ENCODE measurements at regions of chr7 and their contacts with region 1.

Region 1: DNA sequence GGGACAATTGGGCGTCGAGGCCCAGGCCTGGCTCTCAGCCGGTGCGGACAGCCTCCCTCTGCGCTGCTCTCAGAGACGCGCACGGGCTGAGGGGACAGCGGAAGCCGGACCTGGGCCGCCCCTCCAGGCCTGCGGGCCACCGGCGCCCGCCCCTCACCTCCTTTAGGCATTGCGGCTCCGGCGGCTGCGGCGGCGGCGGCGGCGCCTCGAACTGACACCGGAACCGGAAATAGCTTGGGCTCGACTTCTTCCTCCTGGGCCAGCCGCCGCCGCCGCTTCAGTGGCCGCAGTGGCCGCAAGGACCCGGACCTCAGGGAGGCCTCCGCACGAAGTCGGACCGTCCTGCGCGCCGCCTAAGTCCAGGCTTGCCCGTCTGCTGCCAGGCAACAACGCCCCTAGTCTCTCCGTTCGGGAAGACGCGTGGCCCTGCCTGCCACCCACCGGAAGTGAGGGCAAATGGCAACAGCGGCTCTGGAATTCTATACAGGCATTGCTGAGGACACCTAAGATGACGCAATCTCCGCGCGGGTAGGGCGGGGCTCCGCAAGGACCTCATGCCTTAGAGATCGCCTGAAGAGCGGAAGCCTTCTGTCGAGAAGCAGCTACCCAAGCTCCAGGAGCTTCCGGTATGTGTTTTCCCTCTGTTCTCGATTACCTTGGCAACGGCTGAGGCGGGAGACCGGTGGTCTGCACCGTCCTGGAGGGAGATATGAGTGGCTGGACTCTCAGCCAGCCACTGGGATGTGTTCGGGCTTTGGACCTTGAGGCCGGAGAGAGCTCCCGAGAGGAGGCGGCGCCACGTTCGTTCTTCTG is at the starts of genes BUD31 and PDAP1:
- DNase-seq: peak; percentile 86
- ATAC-seq: peak; percentile 88
- H3K4me3 Mint-ChIP-seq: peak within 1 kb of the TSS; percentile 99
- H3K27ac Mint-ChIP-seq: peak within 1 kb of the TSS; percentile 99
- H3K4me1 Mint-ChIP-seq: peaks cover 18% of the 10 kb centered on the region
- H3K27me3 Mint-ChIP-seq: no peaks in the 10 kb centered on the region
- CTCF ChIP-seq: no peak
- total RNA-seq, gene BUD31: 98.4 to 99.5 TPM (median 98.7 TPM) in 3 replicates
- total RNA-seq, gene PDAP1: 157 to 177 TPM (median 160 TPM) in 3 replicates

Region 2: DNA sequence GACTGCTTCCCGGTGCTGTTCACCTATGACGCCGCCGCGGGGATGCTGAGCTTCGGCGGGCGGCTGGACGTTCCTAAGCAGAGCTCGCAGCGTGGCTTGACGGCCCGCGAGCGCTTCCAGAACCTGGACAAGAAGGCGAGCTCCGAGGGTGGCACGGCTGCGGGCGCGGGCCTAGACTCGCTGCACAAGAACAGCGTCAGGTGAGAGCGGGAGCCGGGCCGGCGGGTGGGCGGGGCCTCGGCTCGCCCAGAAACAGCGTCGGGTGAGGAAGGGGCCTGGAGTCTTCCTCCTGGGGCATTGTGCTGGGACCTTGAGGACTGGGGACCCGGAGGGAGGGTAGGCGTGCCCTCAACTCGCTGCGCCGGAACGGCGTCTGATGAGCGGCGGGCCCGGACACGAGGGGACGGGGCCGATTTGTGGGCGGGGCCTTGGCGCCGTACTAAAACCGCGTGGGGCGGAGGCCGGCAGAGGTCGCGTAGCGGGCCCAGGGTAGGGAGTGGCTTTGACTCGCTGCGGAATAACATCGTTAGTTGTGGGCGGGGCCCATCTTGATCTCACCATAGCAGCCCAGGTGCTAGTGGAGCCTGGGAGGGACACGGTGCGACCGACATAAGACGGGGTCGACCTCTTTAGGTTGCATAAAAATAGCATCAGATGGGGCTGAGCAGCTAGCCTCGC is 15.8 kb before region 1 on chr7:
- CTCF ChIA-PET with region 1: interaction called, 13 read pairs
- POLR2A ChIA-PET with region 1: interaction called, 37 read pairs
- DNase-seq: peak; percentile 86
- ATAC-seq: peak; percentile 79
- H3K4me3 Mint-ChIP-seq: peak overlapping the region; percentile 77
- H3K27ac Mint-ChIP-seq: peak overlapping the region; percentile 98
- H3K4me1 Mint-ChIP-seq: peaks cover 12% of the 10 kb centered on the region
- H3K27me3 Mint-ChIP-seq: no peaks in the 10 kb centered on the region
- CTCF ChIP-seq: no peak

Region 3: DNA sequence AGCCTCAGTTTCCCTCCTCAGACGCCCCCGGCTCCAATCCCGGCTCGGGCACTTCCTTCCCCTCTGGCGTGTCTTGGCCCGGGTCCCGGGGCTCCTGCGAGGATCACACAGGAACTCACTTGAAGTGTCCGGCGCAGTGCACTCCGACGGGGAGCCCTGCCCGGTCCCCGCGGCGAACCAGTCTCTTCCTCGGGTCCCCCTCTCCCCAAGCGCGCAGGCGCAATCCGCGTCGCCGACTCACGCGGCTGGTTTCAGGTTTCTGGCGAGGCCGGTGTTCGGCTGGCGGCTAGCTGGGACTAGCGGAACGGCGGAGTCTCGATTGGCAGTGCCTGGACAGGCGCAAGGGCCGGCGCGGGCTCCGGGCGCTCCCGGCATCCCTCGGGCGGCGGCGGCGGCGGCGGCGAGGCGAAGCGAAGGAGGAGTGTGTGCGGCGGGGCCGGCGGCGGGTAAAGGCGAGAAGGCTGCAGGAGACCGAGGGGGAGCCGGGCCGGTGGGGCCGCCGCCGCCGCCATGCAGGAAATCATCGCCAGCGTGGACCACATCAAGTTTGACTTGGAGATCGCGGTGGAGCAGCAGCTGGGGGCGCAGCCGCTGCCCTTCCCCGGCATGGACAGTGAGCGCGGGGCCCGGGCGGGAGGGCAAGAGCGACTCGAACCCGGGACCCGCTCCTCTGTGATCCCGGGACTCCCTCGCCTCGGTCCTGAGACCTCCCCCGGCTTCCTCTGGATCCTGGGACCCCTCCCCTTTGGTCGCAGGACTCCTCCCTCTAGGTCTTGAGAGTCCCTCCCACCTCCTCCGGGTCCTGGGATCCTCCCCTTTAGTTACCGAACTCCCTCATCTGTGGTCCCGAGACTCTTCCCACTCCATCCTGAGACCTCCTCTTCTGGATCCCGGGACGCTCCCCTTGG is 30.2 kb after region 1 on chr7 and contains the starts of genes CPSF4 and PTCD1:
- CTCF ChIA-PET with region 1: no interaction called
- POLR2A ChIA-PET with region 1: interaction called, 11 read pairs
- DNase-seq: peak; percentile 99
- ATAC-seq: peak; percentile 93
- H3K4me3 Mint-ChIP-seq: peak within 1 kb of the TSS; percentile 97
- H3K27ac Mint-ChIP-seq: peak within 1 kb of the TSS; percentile 99
- H3K4me1 Mint-ChIP-seq: peaks cover 23% of the 10 kb centered on the region
- H3K27me3 Mint-ChIP-seq: no peaks in the 10 kb centered on the region
- CTCF ChIP-seq: no peak
- total RNA-seq, gene CPSF4: 79.1 to 109 TPM (median 85.8 TPM) in 3 replicates
- total RNA-seq, gene PTCD1: 8.8 to 11.4 TPM (median 11.1 TPM) in 3 replicates